ENCODE measurements at regions of chr11 and their contacts with region 1.

Region 1: DNA sequence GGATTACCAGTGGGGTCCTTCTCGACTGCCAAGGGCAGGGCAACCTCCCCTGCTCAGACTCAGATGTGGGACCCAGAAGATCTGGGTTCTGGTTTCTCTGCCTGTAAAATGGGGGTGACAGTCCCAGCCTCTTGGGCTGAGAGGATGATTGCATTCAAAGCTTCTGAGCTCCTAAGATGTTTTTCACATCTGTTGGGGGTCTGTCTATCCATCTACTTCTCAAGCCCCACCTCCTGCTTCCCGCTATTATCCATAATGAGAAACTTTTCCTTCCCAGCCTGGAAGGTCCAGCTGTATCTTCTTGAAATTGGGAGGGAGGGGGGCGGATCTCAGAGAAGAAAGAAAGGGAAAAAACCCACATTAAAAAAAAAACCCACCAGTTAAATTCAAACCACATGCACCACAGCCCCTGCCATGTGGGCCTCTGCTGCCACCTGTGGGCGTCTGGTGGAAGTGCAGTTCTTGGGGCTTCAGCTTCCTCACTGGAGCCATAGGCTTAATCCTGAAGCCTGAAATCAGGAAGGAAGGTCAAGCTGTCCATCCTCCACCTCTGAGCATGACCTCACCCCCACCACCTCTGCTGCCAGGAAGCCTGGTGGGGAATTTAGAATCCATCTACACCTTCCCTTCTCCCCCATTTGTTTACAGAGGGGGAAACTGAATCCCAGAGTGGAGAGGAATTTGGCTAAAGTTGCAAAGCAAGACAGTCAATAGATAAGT is 27.3 kb downstream of the ARHGEF17 start:
- DNase-seq: peak; percentile 83
- H3K4me3 Mint-ChIP-seq: no peak overlapping the region
- H3K27ac Mint-ChIP-seq: no peak overlapping the region
- H3K4me1 Mint-ChIP-seq: no peaks in the 10 kb centered on the region
- H3K27me3 Mint-ChIP-seq: no peaks in the 10 kb centered on the region

Region 2: DNA sequence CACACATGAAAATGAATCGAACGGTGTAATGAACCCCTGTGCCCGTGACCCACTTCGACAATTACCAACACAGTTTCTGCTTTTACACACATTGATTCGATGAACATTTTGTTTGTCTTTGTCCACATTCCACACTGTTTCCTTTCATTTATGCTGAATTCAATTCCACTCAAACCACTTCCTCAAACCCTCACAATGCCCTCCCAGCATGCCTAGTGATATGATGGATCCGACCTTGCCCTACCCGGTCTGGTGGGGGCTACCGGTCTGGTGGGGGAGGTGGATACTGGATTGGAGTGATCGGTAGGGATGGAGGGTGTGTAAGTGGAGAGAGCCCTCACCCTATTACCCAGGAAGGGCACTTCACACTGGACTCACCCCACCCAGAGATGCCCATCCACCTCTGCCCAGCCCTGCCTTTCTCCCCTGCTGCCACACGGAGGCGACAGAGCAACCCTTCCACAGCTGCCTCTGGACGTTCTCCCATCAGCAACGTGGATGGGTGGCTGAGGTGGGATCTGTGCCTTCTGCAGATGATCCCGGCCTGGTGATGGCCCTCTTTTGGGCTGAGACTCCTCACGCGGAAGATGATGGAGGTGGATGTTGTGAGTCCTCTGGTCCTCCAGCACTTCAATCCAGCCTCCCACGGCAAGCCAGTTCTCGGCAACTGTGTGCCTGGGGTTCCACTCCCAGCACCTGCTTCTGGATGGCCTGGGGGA is 150.3 kb before region 1 on chr11:
- CTCF ChIA-PET with region 1: interaction called, 10 read pairs
- POLR2A ChIA-PET with region 1: no interaction called
- intact Hi-C with region 1: loop called (anchors 5 kb)
- DNase-seq: peak; percentile 74
- H3K4me3 Mint-ChIP-seq: no peak overlapping the region
- H3K27ac Mint-ChIP-seq: no peak overlapping the region
- H3K4me1 Mint-ChIP-seq: peaks cover 5% of the 10 kb centered on the region
- H3K27me3 Mint-ChIP-seq: peaks cover 7% of the 10 kb centered on the region

Region 3: DNA sequence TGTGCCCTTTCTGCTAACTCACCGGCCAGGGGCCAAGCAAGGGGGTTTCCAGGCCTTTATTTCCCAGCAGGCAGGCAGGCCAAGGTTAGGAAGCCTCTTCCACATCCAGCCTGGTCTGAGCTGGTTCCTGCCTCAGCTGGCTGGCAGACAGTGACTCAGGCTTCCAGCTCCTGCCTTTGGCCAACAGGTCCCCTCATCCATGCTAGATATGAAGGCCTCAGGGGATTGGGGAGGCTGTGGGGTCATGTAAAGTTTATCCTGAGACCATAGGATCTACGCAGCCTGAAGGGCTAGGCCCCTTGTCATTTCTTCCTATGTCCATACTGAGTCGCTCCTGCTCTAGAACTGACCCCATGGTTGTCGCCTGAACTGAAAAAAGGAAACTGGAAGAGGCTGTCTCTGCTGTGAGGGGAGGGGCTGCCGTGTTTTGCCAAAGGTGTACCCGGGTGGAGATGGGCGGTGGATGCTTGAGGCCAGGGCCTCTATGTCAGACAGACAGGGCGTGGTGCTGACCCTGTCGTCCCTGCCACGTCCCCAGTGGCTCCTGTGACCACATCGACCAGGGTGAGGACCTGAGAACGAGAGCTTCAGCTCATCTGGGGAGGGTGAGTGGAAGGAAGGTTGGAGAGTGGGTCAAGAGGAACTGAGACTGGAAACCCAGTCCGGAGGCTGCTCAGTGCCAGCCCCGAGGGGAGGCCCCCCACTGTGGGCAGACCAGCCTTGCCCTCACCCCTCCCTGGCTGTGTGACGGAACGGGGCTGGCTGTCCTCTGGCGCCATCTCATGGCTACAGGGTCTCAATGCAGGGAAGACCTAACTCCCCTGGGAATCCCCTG is 46.3 kb before region 1 on chr11:
- CTCF ChIA-PET with region 1: interaction called, 35 read pairs
- POLR2A ChIA-PET with region 1: no interaction called
- intact Hi-C with region 1: loop called (anchors 2 kb)
- DNase-seq: peak; percentile 67
- H3K4me3 Mint-ChIP-seq: no peak overlapping the region
- H3K27ac Mint-ChIP-seq: no peak overlapping the region
- H3K4me1 Mint-ChIP-seq: peaks cover 6% of the 10 kb centered on the region
- H3K27me3 Mint-ChIP-seq: no peaks in the 10 kb centered on the region

Region 4: GRCh38 chr11:73295231-73295995 is 40.0 kb before region 1 on chr11:
- CTCF ChIA-PET with region 1: interaction called, 35 read pairs
- POLR2A ChIA-PET with region 1: no interaction called
- intact Hi-C with region 1: loop called (anchors 2 kb)
- DNase-seq: peak; percentile 87
- H3K4me3 Mint-ChIP-seq: no peak overlapping the region
- H3K27ac Mint-ChIP-seq: no peak overlapping the region
- H3K4me1 Mint-ChIP-seq: peaks cover 3% of the 10 kb centered on the region
- H3K27me3 Mint-ChIP-seq: no peaks in the 10 kb centered on the region

Region 5: DNA sequence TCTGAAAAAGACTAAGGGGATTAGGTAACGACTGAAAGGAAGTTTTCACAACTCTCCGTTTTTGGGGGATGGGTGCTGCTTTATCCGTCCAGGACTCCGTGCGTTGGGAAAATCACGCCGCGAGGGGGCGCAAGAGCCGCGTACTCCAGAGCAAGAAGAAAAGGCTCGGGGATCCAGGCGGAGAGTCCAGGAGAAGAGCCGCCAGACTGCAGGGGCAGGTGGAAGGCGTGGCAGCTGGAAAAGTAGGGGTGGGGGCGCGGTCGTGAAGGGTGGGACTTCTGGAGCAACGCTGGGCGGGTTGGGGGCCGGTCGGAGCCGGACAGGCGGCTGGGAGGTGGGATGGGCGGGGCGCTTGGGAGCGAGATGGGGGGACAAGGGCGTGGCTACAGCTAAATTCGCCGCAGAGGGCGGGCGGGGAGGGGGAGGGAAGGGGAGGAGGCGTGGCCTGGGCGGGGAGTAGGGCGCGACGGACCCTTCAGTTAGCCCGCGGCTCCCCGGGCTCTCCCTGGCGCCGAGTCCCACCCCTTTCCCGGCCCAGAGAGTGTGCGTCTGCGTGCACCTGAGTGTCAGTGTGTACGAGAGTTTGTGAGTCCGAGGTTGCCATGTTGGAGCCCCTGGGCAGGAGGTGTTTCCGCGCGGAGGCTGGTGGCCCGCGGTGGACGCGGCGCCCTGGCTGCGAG is 27.9 kb before region 1 on chr11:
- CTCF ChIA-PET with region 1: interaction called, 123 read pairs
- POLR2A ChIA-PET with region 1: interaction called, 5 read pairs
- intact Hi-C with region 1: loop called (anchors 1 kb)
- DNase-seq: peak; percentile 93
- H3K4me3 Mint-ChIP-seq: peak overlapping the region; percentile 74
- H3K27ac Mint-ChIP-seq: no peak overlapping the region
- H3K4me1 Mint-ChIP-seq: peaks cover 6% of the 10 kb centered on the region
- H3K27me3 Mint-ChIP-seq: peaks cover 8% of the 10 kb centered on the region

Region 6: GRCh38 chr11:73323464-73323863 is 11.9 kb before region 1 on chr11:
- CTCF ChIA-PET with region 1: interaction called, 11 read pairs
- POLR2A ChIA-PET with region 1: interaction called, 3 read pairs
- intact Hi-C with region 1: no loop called
- DNase-seq: no peak
- H3K4me3 Mint-ChIP-seq: no peak overlapping the region
- H3K27ac Mint-ChIP-seq: no peak overlapping the region
- H3K4me1 Mint-ChIP-seq: peaks cover 6% of the 10 kb centered on the region
- H3K27me3 Mint-ChIP-seq: no peaks in the 10 kb centered on the region